CD4-positive, alpha-beta T cell (primary cell): ENCODE measurements at regions of chr17 and their contacts with region 1.

Region 1: DNA sequence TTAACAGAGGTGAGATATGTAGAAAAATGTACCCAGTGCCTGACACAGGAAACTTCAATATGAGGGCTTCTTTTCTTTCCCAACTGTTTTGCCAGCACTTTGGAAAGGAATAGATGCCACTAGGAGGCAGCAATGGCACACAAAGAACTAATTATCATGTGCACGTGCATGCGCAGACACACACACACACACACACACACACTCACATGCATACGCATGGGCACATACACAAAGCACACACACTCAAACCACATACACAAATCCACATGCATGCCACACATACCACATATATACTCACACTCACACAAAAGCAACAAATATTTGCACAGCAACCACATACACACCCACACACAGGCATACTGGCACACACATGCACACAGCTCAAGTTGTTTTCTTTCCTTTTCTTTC is 8.8 kb upstream of the CEP112 start:
- DNase-seq: peak in 11 of 14 experiments; percentile 4 to 82 (median 41)
- ATAC-seq: peak; percentile 45
- H3K4me3 ChIP-seq: no peak overlapping the region
- H3K4me3 Mint-ChIP-seq: peak overlapping the region; percentile 23
- H3K27ac ChIP-seq: no peak overlapping the region
- H3K27ac Mint-ChIP-seq: peak overlapping the region; percentile 32
- H3K4me1 ChIP-seq: peaks cover 18% of the 10 kb centered on the region
- H3K4me1 Mint-ChIP-seq: peaks cover 22% of the 10 kb centered on the region
- H3K27me3 ChIP-seq: no peaks in the 10 kb centered on the region
- H3K27me3 Mint-ChIP-seq: no peaks in the 10 kb centered on the region
- CTCF ChIP-seq: peak; percentile 67

Region 2: DNA sequence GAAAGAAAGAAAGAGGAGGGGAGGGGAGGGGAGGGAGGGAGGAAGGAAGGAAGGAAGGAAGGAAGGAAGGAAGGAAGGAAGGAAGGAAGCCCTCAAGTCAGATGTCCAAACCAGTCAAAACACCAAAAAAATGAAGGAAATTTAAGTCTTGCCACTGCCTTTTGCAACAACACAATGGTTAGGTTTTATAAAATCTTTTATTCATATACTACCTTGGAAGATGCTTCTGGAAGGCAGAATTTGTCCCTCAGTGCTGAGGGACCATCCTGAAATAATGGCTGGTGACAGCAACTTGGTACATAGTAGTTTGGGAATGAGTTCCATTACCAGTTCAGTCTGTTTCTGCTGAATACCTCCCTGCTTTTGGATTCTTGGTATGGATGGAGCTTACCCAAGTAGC is 20.7 kb after region 1 on chr17:
- CTCF ChIA-PET with region 1: no interaction called
- POLR2A ChIA-PET with region 1: no interaction called
- intact Hi-C with region 1: no loop called
- DNase-seq: no peak
- ATAC-seq: no peak
- H3K4me3 ChIP-seq: no peak overlapping the region
- H3K4me3 Mint-ChIP-seq: no peak overlapping the region
- H3K27ac ChIP-seq: no peak overlapping the region
- H3K27ac Mint-ChIP-seq: no peak overlapping the region
- H3K4me1 ChIP-seq: no peaks in the 10 kb centered on the region
- H3K4me1 Mint-ChIP-seq: no peaks in the 10 kb centered on the region
- H3K27me3 ChIP-seq: no peaks in the 10 kb centered on the region
- H3K27me3 Mint-ChIP-seq: no peaks in the 10 kb centered on the region
- CTCF ChIP-seq: no peak

Region 3: GRCh38 chr17:66248285-66248684 is 47.6 kb after region 1 on chr17:
- CTCF ChIA-PET with region 1: interaction called, 3 read pairs
- POLR2A ChIA-PET with region 1: interaction called, 6 read pairs
- intact Hi-C with region 1: loop called (anchors 2 to 5 kb)
- DNase-seq: no peak
- ATAC-seq: no peak
- H3K4me3 ChIP-seq: no peak overlapping the region
- H3K4me3 Mint-ChIP-seq: no peak overlapping the region
- H3K27ac ChIP-seq: no peak overlapping the region
- H3K27ac Mint-ChIP-seq: peak overlapping the region; percentile 61
- H3K4me1 ChIP-seq: peaks cover 36% of the 10 kb centered on the region
- H3K4me1 Mint-ChIP-seq: peaks cover 38% of the 10 kb centered on the region
- H3K27me3 ChIP-seq: no peaks in the 10 kb centered on the region
- H3K27me3 Mint-ChIP-seq: no peaks in the 10 kb centered on the region
- CTCF ChIP-seq: no peak

Region 4: GRCh38 chr17:66426397-66427033 is 225.8 kb after region 1 on chr17:
- CTCF ChIA-PET with region 1: no interaction called
- POLR2A ChIA-PET with region 1: no interaction called
- intact Hi-C with region 1: loop called (anchors 1 kb)
- DNase-seq: peak in 13 of 14 experiments; percentile 11 to 81 (median 34)
- ATAC-seq: peak; percentile 98
- H3K4me3 ChIP-seq: no peak overlapping the region
- H3K4me3 Mint-ChIP-seq: peak overlapping the region; percentile 43
- H3K27ac ChIP-seq: no peak overlapping the region
- H3K27ac Mint-ChIP-seq: peak overlapping the region; percentile 59
- H3K4me1 ChIP-seq: peaks cover 26% of the 10 kb centered on the region
- H3K4me1 Mint-ChIP-seq: peaks cover 75% of the 10 kb centered on the region
- H3K27me3 ChIP-seq: no peaks in the 10 kb centered on the region
- H3K27me3 Mint-ChIP-seq: no peaks in the 10 kb centered on the region
- CTCF ChIP-seq: peak; percentile 69

Region 5: DNA sequence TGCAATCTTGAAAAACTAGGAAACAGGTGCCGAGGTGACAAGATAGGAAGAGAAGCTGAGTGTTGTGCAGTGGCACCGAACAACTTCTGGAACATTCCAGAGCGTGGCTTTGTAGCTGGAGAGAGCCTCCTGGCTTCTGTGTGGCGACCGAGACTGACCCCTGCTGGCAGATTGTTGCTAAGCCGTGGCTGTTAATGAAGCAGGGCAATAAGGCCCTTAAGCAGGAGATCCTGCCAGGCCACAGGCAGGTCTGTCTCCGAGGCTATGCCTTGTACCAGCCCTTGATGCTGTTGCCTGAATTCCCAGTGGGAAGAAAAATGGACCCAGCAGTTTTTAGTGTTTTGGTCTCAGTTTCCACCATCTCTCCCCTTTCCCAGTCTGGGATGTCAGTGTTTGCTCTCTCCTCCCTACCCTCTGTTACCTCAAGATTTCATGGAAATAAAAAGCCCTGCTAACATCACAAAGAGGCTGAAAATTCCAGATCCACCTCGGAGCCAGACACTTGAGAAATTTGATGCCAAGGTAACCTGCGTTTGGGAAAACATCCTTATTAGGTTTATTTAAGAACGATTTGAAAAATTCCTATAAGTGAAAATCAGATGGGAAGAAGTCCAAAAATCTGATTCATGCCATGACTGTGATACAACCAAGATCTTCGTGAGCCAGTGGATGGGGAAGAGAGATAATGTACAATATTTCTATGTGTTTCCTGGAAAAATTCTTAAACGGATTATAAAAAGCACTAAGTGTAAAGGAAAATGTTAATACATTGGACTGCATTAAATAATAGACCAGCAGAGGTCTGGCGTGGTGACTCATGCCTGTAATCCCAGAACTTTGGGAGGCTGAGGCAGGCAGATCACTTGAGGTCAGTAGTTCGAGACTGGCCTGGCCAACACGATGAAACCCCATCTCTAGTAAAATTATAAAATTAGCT is 366.8 kb after region 1 on chr17:
- CTCF ChIA-PET with region 1: interaction called, 22 read pairs
- POLR2A ChIA-PET with region 1: interaction called, 3 read pairs
- intact Hi-C with region 1: loop called (anchors 1 to 2 kb)
- DNase-seq: peak; percentile 71 to 90 (median 80)
- ATAC-seq: peak; percentile 88
- H3K4me3 ChIP-seq: no peak overlapping the region
- H3K4me3 Mint-ChIP-seq: no peak overlapping the region
- H3K27ac ChIP-seq: no peak overlapping the region
- H3K27ac Mint-ChIP-seq: peak overlapping the region; percentile 7
- H3K4me1 ChIP-seq: peaks cover 5% of the 10 kb centered on the region
- H3K4me1 Mint-ChIP-seq: peaks cover 41% of the 10 kb centered on the region
- H3K27me3 ChIP-seq: no peaks in the 10 kb centered on the region
- H3K27me3 Mint-ChIP-seq: no peaks in the 10 kb centered on the region
- CTCF ChIP-seq: peak; percentile 87

Region 6: GRCh38 chr17:66673668-66674315 is 473.1 kb after region 1 on chr17:
- CTCF ChIA-PET with region 1: interaction called, 4 read pairs
- POLR2A ChIA-PET with region 1: no interaction called
- intact Hi-C with region 1: loop called (anchors 2 kb)
- DNase-seq: peak; percentile 20 to 90 (median 44)
- ATAC-seq: peak; percentile 84
- H3K4me3 ChIP-seq: no peak overlapping the region
- H3K4me3 Mint-ChIP-seq: peak overlapping the region; percentile 52
- H3K27ac ChIP-seq: peak overlapping the region; percentile 51 to 78
- H3K27ac Mint-ChIP-seq: peak overlapping the region; percentile 88
- H3K4me1 ChIP-seq: peaks cover 22% of the 10 kb centered on the region
- H3K4me1 Mint-ChIP-seq: peaks cover 55% of the 10 kb centered on the region
- H3K27me3 ChIP-seq: no peaks in the 10 kb centered on the region
- H3K27me3 Mint-ChIP-seq: no peaks in the 10 kb centered on the region
- CTCF ChIP-seq: peak; percentile 68

Region 7: DNA sequence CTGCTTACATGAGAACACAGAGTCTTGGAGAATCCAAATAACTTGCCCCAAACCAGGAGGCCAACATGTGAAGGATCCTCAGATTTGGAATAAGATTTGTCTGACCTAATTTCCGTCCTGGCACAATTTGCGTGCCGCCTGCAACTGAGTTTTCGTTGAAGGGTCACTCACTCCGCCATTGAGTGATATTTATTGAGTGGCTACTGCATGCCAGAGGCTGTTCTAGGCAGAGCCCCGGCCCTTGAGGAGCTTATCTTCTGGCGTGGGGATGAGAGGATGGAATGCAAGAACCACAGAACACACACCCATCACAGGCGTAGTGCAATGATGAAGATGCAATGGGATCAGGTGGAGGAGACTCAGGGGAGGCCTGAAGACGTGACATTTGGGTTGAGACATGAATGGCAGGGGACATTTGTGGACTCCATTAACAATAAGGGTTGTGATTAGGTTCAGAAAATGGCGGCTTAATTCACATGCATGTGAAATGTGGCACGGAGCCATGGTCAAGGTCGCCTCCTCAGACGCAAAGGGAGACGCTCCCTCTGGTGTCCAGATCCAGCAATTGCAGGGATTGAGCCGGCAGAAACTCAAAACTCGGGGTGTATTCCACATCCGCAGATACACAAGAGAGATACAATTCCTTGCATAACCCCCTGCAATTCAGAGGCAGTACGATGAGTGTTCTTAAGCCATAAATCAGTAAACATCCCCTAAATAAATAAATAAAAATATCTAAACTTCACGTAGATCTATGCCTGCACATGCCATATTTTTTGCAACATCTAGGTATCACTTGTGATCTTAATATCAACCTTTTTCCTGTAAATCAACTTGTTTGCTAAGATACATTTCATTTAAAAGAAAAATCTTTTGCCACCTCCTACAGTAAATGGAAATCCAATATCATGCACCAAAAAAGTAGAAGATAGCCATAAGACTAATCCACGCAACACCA is 705.9 kb after region 1 on chr17:
- CTCF ChIA-PET with region 1: no interaction called
- POLR2A ChIA-PET with region 1: no interaction called
- intact Hi-C with region 1: loop called in 1 of 2 experiments (anchors 1 kb)
- DNase-seq: peak; percentile 38 to 79 (median 50)
- ATAC-seq: peak; percentile 56
- H3K4me3 ChIP-seq: no peak overlapping the region
- H3K4me3 Mint-ChIP-seq: no peak overlapping the region
- H3K27ac ChIP-seq: no peak overlapping the region
- H3K27ac Mint-ChIP-seq: no peak overlapping the region
- H3K4me1 ChIP-seq: peaks cover 5% of the 10 kb centered on the region
- H3K4me1 Mint-ChIP-seq: peaks cover 5% of the 10 kb centered on the region
- H3K27me3 ChIP-seq: peaks cover 0 to 2% of the 10 kb centered on the region in 2 experiments
- H3K27me3 Mint-ChIP-seq: no peaks in the 10 kb centered on the region
- CTCF ChIP-seq: peak; percentile 90

Region 8: GRCh38 chr17:67293251-67294203 is 1092.8 kb after region 1 on chr17:
- CTCF ChIA-PET with region 1: no interaction called
- POLR2A ChIA-PET with region 1: no interaction called
- intact Hi-C with region 1: loop called in 1 of 2 experiments (anchors 10 kb)
- DNase-seq: peak; percentile 44 to 84 (median 58)
- ATAC-seq: peak; percentile 98
- H3K4me3 ChIP-seq: peak overlapping the region; percentile 10
- H3K4me3 Mint-ChIP-seq: peak overlapping the region; percentile 20
- H3K27ac ChIP-seq: no peak overlapping the region
- H3K27ac Mint-ChIP-seq: no peak overlapping the region
- H3K4me1 ChIP-seq: peaks cover 10% of the 10 kb centered on the region
- H3K4me1 Mint-ChIP-seq: no peaks in the 10 kb centered on the region
- H3K27me3 ChIP-seq: no peaks in the 10 kb centered on the region
- H3K27me3 Mint-ChIP-seq: no peaks in the 10 kb centered on the region
- CTCF ChIP-seq: peak; percentile 79